ENCODE measurements at regions of chr1 and their contacts with region 1.

Region 1: GRCh38 chr1:166875734-166876539 is at the start of gene TADA1:
- DNase-seq: peak; percentile 99
- ATAC-seq: peak; percentile 87
- H3K4me3 ChIP-seq: peak within 1 kb of the TSS; percentile 73
- H3K27ac ChIP-seq: peak within 1 kb of the TSS; percentile 78
- H3K4me1 ChIP-seq: 0 out of 2 replicates have a peak, but pooled peaks cover 23% of the 10 kb centered on the region
- H3K27me3 ChIP-seq: no peaks in the 10 kb centered on the region
- CTCF ChIP-seq: no peak
- total RNA-seq, gene TADA1: 12.4 and 15.3 TPM in 2 replicates

Region 2: GRCh38 chr1:166838766-166839599 is 37.0 kb before region 1 on chr1 and contains the start of gene POGK:
- CTCF ChIA-PET with region 1: no interaction called
- POLR2A ChIA-PET with region 1: interaction called, 13 read pairs
- intact Hi-C with region 1: loop called (anchors 1 kb)
- DNase-seq: peak; percentile 91
- ATAC-seq: peak; percentile 94
- H3K4me3 ChIP-seq: peak within 1 kb of the TSS; percentile 78
- H3K27ac ChIP-seq: peak within 1 kb of the TSS; percentile 65
- H3K4me1 ChIP-seq: peaks cover 24% of the 10 kb centered on the region
- H3K27me3 ChIP-seq: peaks cover 10% of the 10 kb centered on the region
- CTCF ChIP-seq: no peak
- total RNA-seq, gene POGK: 38.3 and 44.2 TPM in 2 replicates

Measured in PC-3 (cell line).